HCT116 (cell line): ENCODE measurements at regions of chr6 and their contacts with region 1.

Region 1: DNA sequence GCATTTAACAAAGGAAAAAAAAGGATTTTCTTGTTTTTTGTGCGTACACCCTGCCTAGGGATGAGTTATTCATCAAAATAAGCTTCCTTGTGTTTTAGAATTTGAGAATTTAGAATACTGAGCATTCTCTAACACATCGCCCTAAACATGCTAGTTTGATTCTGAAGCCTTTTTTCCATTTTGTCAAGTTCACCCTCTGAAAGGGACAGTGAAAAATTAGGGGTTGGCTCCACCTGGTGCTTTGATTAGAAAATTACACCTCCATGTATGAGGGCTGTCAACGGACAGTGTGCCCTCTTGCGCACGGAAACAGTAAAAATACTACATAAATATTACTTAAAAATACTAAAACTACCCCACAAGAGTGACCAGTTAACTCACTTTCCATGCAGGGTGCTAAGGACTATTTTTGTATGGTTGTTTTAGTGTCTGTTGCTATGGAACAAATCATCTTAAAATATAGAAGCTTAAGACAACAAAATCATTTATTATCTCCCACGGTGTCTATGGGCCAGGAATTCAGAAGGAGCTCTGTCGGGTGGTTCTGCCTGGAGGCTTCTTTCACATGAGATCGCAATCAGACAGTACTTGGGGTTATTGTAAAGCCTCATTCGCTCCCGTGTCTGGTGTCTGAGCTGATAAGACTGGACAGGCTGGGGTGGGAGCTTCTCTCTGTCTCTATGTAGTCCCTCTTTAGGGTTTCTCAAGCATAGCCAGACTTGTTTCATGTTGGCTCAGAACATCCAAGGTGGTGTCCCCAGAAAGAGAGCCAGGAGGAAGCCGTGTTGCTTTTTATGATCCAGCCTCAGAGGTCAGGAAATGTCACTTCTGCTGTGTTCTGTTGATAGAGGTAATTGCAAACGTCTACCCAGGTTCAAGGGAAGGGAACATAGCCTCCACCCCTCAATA is 41.1 kb upstream of the TMEM170B start:
- DNase-seq: peak; percentile 74
- ATAC-seq: peak; percentile 96
- H3K4me3 ChIP-seq: no peak overlapping the region
- H3K27ac ChIP-seq: no peak overlapping the region
- H3K4me1 ChIP-seq: no peaks in the 10 kb centered on the region
- H3K27me3 ChIP-seq: no peaks in the 10 kb centered on the region
- CTCF ChIP-seq: peak; percentile 76 to 99 (median 85)
- POLR2A ChIP-seq: no peak
- RAD21 ChIP-seq: peak; percentile 98

Region 2: DNA sequence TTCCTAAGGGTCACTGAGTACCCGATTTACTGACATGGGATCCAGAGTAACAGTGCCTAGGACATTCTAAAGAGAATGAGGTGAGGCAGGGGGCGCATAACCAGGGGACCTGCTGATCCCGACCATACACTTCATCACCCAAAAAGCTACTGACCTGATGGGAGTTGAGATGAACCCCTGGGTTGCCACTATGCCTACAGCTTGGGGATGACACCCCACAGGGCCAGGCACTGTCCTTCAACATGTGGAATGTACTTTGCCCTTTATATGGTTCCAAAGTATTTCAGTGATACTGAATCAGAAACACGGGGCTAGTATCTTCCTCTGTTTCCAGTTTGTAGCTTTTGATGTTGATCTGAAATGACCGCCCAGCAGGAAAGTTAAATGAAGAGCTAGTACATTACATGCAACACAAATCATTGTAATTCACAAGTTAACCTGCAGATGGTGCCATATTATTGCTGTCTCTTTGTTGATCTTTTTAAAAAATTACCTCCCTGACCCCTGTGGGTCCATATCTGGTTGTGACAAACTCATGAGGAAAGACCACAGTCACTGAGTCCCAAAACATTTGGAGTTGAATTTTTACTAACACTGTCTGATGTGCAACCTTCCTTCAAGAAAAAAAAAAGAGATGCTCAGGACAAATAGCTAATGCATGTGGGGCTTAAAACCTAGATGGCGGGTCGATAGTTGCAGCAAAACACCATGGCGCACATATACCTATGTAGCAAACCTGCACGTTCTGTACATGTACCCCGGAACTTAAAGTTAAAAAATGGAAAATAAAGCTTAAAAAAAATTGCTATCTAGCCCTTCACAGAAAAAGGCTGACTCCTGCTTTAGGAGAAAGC is 1018.0 kb before region 1 on chr6:
- CTCF ChIA-PET with region 1: interaction called, 8 read pairs
- POLR2A ChIA-PET with region 1: no interaction called
- RAD21 ChIA-PET with region 1: no interaction called
- intact Hi-C with region 1: loop called (anchors 10 kb)
- DNase-seq: peak; percentile 41
- ATAC-seq: peak; percentile 79
- H3K4me3 ChIP-seq: no peak overlapping the region
- H3K27ac ChIP-seq: no peak overlapping the region
- H3K4me1 ChIP-seq: peaks cover 0 to 10% of the 10 kb centered on the region in 2 experiments; a peak in 2 of 4 replicates
- H3K27me3 ChIP-seq: no peaks in the 10 kb centered on the region
- CTCF ChIP-seq: peak; percentile 46 to 79 (median 56); a peak in 4 of 6 replicates
- POLR2A ChIP-seq: no peak
- RAD21 ChIP-seq: peak; percentile 85

Region 3: DNA sequence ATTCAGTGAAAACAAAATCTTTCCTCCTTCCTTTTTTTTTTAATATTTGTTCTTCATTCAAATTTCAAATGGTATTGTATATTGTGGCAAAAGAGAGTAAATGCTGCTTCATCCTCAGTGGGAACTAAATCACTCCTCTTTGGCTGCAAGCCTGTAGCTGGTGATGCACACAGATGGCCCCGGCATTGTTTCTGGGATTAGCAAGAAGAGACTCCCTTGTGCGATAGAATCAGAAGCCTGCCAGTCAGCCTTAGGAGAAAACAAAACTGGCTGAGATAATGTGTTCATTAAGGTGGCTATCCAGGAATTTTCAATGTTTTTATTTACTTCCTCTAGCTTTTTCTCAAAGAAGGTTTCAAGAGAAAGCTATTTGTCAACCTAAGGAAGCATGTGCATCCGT is 431.6 kb before region 1 on chr6:
- CTCF ChIA-PET with region 1: interaction called, 7 read pairs
- POLR2A ChIA-PET with region 1: no interaction called
- RAD21 ChIA-PET with region 1: no interaction called
- intact Hi-C with region 1: loop called (anchors 5 kb)
- DNase-seq: no peak
- ATAC-seq: no peak
- H3K4me3 ChIP-seq: no peak overlapping the region
- H3K27ac ChIP-seq: no peak overlapping the region
- H3K4me1 ChIP-seq: no peaks in the 10 kb centered on the region
- H3K27me3 ChIP-seq: no peaks in the 10 kb centered on the region
- CTCF ChIP-seq: no peak
- POLR2A ChIP-seq: no peak
- RAD21 ChIP-seq: no peak

Region 4: DNA sequence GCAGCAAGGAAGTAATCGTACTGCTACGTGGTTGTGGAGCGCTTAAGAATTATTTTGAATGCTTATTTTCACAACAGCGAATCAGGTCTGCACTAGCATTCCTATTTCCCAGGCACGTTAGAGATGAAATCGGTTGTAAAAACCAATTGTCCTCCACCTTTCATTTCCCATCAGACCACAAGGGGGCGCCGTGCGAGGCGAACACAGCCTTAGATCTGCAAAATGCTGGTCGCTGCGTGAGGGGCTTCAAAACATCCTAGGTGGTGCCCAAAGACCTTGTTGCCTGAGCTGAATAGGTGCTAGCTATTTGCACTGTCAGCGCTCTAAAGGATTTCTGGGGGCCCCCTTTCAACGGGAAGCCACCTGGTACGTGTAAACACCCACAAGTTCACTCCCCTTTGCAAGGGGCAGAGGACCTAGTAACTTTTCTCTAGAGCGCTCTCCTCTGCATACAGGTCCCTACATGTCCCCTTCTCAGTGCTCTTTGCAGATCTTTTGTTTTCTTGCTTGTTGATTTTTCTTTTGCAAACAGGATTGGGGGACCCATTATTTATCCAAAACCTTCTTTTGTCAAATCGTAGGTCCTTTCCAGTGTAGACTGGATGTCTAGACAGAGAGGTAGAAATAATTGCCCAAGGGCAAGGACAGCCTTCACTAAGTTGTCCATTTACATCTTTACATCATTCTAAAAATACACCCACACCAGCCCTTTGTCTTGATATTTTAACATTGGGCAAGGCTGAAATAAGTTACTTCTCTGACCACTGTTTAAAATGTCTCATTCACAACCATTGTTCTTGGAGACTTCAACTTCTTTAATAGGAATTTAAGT is 323.7 kb before region 1 on chr6:
- CTCF ChIA-PET with region 1: interaction called, 5 read pairs
- POLR2A ChIA-PET with region 1: no interaction called
- RAD21 ChIA-PET with region 1: interaction called in 1 of 2 experiments, 3 read pairs
- intact Hi-C with region 1: loop called (anchors 1 kb)
- DNase-seq: peak; percentile 23
- ATAC-seq: peak; percentile 92
- H3K4me3 ChIP-seq: no peak overlapping the region
- H3K27ac ChIP-seq: no peak overlapping the region
- H3K4me1 ChIP-seq: no peaks in the 10 kb centered on the region
- H3K27me3 ChIP-seq: no peaks in the 10 kb centered on the region
- CTCF ChIP-seq: peak; percentile 78 to 92 (median 80)
- POLR2A ChIP-seq: no peak
- RAD21 ChIP-seq: peak; percentile 70

Region 5: DNA sequence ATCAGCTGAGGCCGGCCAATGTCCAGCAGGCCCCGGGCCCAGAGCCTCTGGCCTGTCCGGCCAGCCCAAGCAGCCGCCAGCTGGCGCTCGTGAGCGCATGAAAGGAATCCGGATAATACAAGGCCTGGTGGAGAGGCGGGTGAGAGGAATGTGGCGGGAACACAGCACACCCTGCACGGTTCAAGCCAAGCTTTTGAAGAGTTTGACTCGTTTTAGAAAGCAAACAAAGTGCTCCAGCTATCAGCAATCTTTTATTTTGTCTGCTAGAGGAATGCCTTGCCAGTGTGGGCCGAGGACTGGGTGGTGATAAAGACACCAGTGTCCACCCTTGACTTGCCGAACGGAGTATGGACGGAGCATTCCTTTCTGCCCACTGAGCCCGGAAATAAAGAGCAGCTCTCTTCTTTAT is 254.6 kb before region 1 on chr6:
- CTCF ChIA-PET with region 1: no interaction called
- POLR2A ChIA-PET with region 1: no interaction called
- RAD21 ChIA-PET with region 1: no interaction called
- intact Hi-C with region 1: loop called (anchors 1 kb)
- DNase-seq: no peak
- ATAC-seq: peak; percentile 96
- H3K4me3 ChIP-seq: no peak overlapping the region
- H3K27ac ChIP-seq: no peak overlapping the region
- H3K4me1 ChIP-seq: no peaks in the 10 kb centered on the region
- H3K27me3 ChIP-seq: no peaks in the 10 kb centered on the region
- CTCF ChIP-seq: peak; percentile 38 to 76 (median 63); a peak in 5 of 6 replicates
- POLR2A ChIP-seq: no peak
- RAD21 ChIP-seq: peak; percentile 45

Region 6: GRCh38 chr6:11537229-11538051 is 41.0 kb after region 1 on chr6 and contains the start of gene TMEM170B:
- CTCF ChIA-PET with region 1: no interaction called
- POLR2A ChIA-PET with region 1: no interaction called
- RAD21 ChIA-PET with region 1: no interaction called
- intact Hi-C with region 1: no loop called
- DNase-seq: peak; percentile 37
- ATAC-seq: peak; percentile 98
- H3K4me3 ChIP-seq: peak within 1 kb of the TSS; percentile 38 to 60
- H3K27ac ChIP-seq: peak within 1 kb of the TSS; percentile 20; the same call in 1 of the 2 replicates
- H3K4me1 ChIP-seq: peaks cover 7 to 15% of the 10 kb centered on the region in 2 experiments
- H3K27me3 ChIP-seq: no peaks in the 10 kb centered on the region
- CTCF ChIP-seq: no peak
- POLR2A ChIP-seq: no peak
- RAD21 ChIP-seq: no peak
- total RNA-seq, gene TMEM170B: 1.0 TPM

Region 7: DNA sequence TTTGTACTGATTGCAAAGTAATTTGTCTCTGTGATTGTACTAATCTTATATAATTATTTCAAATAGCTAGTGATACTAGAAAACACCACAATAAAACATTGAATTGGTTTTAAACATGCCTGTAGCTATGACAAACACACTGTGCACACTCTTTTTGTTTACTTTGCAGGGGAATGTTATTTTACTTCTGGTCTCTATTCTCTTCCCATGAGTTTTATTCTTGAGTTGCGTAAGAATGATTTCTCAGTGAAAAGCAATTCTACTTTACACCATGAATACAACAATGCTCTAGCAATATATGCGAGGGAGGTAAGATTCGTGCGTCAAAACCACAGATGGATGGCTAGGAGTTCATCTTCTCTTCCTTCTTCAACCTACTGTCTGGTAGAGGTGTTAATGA is 1151.8 kb after region 1 on chr6:
- CTCF ChIA-PET with region 1: no interaction called
- POLR2A ChIA-PET with region 1: no interaction called
- RAD21 ChIA-PET with region 1: no interaction called
- intact Hi-C with region 1: no loop called
- DNase-seq: no peak
- ATAC-seq: no peak
- H3K4me3 ChIP-seq: no peak overlapping the region
- H3K27ac ChIP-seq: no peak overlapping the region
- H3K4me1 ChIP-seq: no peaks in the 10 kb centered on the region
- H3K27me3 ChIP-seq: peaks cover 3% of the 10 kb centered on the region
- CTCF ChIP-seq: no peak
- POLR2A ChIP-seq: no peak
- RAD21 ChIP-seq: no peak